ENCODE measurements at regions of chr1 and their contacts with region 1.

Region 1: DNA sequence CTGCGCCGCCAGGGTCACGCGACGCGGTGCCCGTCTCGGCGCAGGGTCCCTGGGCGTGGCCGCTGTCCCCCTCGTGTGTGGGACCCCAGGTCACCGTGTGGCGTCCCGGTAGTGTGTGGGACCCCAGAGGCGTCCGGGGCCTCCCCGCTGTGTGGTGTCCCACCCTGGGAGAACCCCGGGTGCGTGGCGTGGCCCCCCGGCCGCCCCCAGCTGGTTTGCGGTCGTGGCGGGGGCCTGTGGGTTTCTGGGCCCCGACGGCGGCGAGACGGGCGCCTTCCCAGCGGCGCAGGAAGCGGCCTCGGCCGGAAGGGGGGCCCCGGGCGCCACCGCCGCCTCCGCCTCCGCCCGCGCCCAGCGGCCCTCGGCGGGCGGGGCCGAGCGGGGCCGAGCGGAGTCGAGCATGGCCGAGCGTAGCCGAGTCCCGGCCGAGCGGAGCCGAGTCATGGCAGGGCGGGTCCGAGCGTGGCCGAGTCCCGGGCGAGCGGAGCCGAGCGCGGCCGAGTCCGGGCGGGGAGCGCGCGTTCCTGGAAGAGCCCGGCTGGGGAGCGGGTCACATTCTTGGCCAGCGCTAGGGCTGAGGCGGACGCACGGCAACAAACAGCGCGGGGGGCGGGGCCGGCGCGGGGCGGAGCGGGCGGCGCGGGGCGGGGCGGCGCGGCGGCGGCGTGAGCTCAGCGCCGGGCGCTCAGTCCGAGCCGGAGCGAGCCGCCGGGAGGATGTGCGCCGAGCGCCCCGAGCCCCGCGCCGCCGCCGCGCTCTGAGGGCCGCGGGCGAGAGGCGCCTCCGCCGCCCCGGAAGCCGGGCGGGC is 569 bp upstream of the SKI start:
- DNase-seq: peak; percentile 97
- H3K4me3 Mint-ChIP-seq: peak overlapping the region; percentile 55
- H3K27ac Mint-ChIP-seq: no peak overlapping the region
- H3K4me1 Mint-ChIP-seq: peaks cover 9% of the 10 kb centered on the region
- H3K27me3 Mint-ChIP-seq: peaks cover 1% of the 10 kb centered on the region

Region 2: GRCh38 chr1:2381741-2382620 is 154.4 kb after region 1 on chr1:
- CTCF ChIA-PET with region 1: interaction called, 18 read pairs
- POLR2A ChIA-PET with region 1: interaction called, 4 read pairs
- intact Hi-C with region 1: no loop called
- DNase-seq: peak; percentile 85
- H3K4me3 Mint-ChIP-seq: no peak overlapping the region
- H3K27ac Mint-ChIP-seq: no peak overlapping the region
- H3K4me1 Mint-ChIP-seq: no peaks in the 10 kb centered on the region
- H3K27me3 Mint-ChIP-seq: no peaks in the 10 kb centered on the region

Region 3: DNA sequence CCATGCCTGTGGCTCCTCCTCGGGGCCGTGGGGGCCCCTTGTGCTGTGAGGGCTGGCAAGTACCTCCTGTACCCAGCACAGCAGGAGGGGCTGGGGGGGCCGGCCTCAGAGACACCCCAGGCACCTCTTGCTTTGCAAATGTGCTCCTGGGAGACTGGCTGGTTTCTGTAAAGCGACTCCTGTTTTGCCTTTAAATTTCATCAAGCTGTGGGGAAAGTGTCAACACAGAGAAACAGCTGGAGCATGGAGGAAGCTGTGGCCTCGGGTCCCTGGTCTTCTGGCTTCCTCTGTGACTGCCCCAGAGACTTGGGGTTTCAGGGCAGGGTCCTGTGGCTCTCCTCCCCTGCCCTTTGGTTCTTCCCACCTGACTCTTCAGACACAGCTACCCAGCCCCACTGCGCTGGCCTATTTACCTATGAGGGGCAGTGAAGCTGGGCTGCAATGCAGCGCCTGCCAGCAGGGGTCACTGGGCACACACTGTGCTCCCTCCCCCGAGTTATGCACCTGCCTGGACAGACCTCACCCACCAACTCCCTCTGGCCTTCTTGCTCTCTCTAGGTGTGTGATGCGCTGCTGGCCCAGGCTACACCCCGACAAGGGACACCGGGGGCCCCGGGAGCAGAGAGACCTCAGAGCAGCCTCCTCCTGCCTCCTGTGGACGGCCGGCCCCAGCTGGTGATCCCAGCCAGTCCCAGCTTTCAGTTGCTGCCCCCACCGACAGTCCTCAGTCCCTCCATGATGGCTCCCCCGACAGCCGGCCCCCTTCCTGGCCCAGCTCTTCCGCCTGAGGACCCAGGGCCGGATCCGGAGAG is 202.4 kb after region 1 on chr1:
- CTCF ChIA-PET with region 1: no interaction called
- POLR2A ChIA-PET with region 1: no interaction called
- intact Hi-C with region 1: no loop called
- DNase-seq: peak; percentile 38
- H3K4me3 Mint-ChIP-seq: no peak overlapping the region
- H3K27ac Mint-ChIP-seq: no peak overlapping the region
- H3K4me1 Mint-ChIP-seq: no peaks in the 10 kb centered on the region
- H3K27me3 Mint-ChIP-seq: no peaks in the 10 kb centered on the region

Region 4: GRCh38 chr1:3333903-3334302 is 1106.4 kb after region 1 on chr1:
- CTCF ChIA-PET with region 1: no interaction called
- POLR2A ChIA-PET with region 1: no interaction called
- intact Hi-C with region 1: no loop called
- DNase-seq: no peak
- H3K4me3 Mint-ChIP-seq: no peak overlapping the region
- H3K27ac Mint-ChIP-seq: no peak overlapping the region
- H3K4me1 Mint-ChIP-seq: no peaks in the 10 kb centered on the region
- H3K27me3 Mint-ChIP-seq: no peaks in the 10 kb centered on the region

Measured in activated CD4-positive, alpha-beta memory T cell treated with anti-CD3 and anti-CD28 coated beads for 36 hours (primary cell).